Activated naive CD4-positive, alpha-beta T cell treated with anti-CD3 and anti-CD28 coated beads, Interleukin-2, amount 10 ng/mL, durations not matched to agents 7 days and 5 days (primary cell): ENCODE measurements at regions of chr18 and their contacts with region 1.

Region 1: GRCh38 chr18:45664824-45665763 is 49.8 kb downstream of the SLC14A2 start:
- DNase-seq: peak; percentile 76
- H3K4me3 Mint-ChIP-seq: no peak overlapping the region
- H3K27ac Mint-ChIP-seq: peak overlapping the region; percentile 84
- H3K4me1 Mint-ChIP-seq: peaks cover 52% of the 10 kb centered on the region
- H3K27me3 Mint-ChIP-seq: peaks cover 34% of the 10 kb centered on the region

Region 2: GRCh38 chr18:45282101-45282812 is 382.8 kb before region 1 on chr18:
- CTCF ChIA-PET with region 1: no interaction called
- DNase-seq: no peak
- H3K4me3 Mint-ChIP-seq: no peak overlapping the region
- H3K27ac Mint-ChIP-seq: no peak overlapping the region
- H3K4me1 Mint-ChIP-seq: no peaks in the 10 kb centered on the region
- H3K27me3 Mint-ChIP-seq: peaks cover 4% of the 10 kb centered on the region

Region 3: GRCh38 chr18:45528711-45529336 is 136.3 kb before region 1 on chr18:
- CTCF ChIA-PET with region 1: no interaction called
- DNase-seq: no peak
- H3K4me3 Mint-ChIP-seq: no peak overlapping the region
- H3K27ac Mint-ChIP-seq: no peak overlapping the region
- H3K4me1 Mint-ChIP-seq: no peaks in the 10 kb centered on the region
- H3K27me3 Mint-ChIP-seq: no peaks in the 10 kb centered on the region

Region 4: GRCh38 chr18:45690975-45691815 is 26.1 kb after region 1 on chr18:
- CTCF ChIA-PET with region 1: interaction called, 97 read pairs
- DNase-seq: peak; percentile 83
- H3K4me3 Mint-ChIP-seq: no peak overlapping the region
- H3K27ac Mint-ChIP-seq: no peak overlapping the region
- H3K4me1 Mint-ChIP-seq: peaks cover 44% of the 10 kb centered on the region
- H3K27me3 Mint-ChIP-seq: peaks cover 37% of the 10 kb centered on the region

Region 5: DNA sequence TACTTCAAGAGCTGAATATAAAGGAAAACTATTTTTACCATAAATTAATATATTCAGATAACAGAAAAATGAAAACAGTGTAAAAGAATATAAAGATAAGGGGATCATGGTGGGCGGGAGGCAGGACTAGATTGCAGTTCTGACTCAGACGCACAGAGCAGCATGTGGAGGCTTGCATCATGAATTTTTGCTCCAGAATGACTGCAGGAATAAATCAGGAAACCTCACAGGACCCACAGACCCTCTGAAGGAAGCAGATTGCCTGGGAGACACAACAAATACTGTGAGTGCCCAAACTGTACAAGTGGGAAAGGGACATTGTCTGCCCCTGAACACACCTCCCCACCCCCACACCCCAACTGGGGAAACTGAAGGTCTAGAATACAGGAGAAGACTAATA is 141.1 kb after region 1 on chr18:
- CTCF ChIA-PET with region 1: interaction called, 11 read pairs
- DNase-seq: no peak
- H3K4me3 Mint-ChIP-seq: no peak overlapping the region
- H3K27ac Mint-ChIP-seq: no peak overlapping the region
- H3K4me1 Mint-ChIP-seq: peaks cover 16% of the 10 kb centered on the region
- H3K27me3 Mint-ChIP-seq: peaks cover 20% of the 10 kb centered on the region

Region 6: DNA sequence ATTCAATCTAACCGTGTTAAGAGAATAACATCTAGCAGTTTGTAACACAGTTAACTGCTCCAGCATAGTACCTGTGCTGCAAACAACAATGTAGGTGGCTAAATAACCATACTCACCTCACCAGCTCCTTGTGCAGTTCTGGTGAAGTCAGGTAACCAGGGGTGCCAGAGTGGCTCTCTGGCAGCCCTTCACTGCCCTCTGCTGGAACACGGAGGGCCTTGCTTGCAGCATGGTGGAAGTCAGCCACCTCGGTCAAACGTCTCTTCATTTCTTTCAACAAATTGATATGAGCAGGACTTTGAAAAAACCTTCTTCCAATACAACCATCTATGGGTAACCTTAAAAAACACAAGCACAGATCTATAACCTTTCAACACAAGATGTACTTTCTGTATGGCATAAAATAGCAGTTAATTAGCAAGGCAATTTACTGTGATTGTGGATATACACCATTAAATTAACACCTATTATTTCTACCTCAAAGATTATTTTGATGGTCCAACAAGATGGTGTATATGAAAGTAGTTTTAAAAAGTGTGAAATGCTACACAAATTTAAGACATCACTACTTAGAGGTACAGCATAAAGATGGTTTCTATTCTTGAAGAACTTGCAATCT is 245.4 kb after region 1 on chr18:
- CTCF ChIA-PET with region 1: interaction called, 42 read pairs
- DNase-seq: peak; percentile 77
- H3K4me3 Mint-ChIP-seq: no peak overlapping the region
- H3K27ac Mint-ChIP-seq: no peak overlapping the region
- H3K4me1 Mint-ChIP-seq: no peaks in the 10 kb centered on the region
- H3K27me3 Mint-ChIP-seq: no peaks in the 10 kb centered on the region